Activated CD8-positive, alpha-beta T cell treated with anti-CD3 and anti-CD28 coated beads, Interleukin-2, amount 10 ng/mL, durations not matched to agents 7 days and 5 days (primary cell): ENCODE measurements at regions of chr10 and their contacts with region 1.

Region 1: GRCh38 chr10:61903221-61903927 is 1.9 kb downstream of the ARID5B start:
- DNase-seq: peak; percentile 79
- ATAC-seq: peak; percentile 67
- H3K4me3 Mint-ChIP-seq: peak overlapping the region; percentile 94
- H3K27ac Mint-ChIP-seq: peak overlapping the region; percentile 97
- H3K4me1 Mint-ChIP-seq: peaks cover 36% of the 10 kb centered on the region
- H3K27me3 Mint-ChIP-seq: no peaks in the 10 kb centered on the region

Region 2: GRCh38 chr10:61943674-61944410 is 40.5 kb after region 1 on chr10:
- CTCF ChIA-PET with region 1: interaction called, 29 read pairs
- POLR2A ChIA-PET with region 1: interaction called, 53 read pairs
- DNase-seq: no peak
- ATAC-seq: peak; percentile 29
- H3K4me3 Mint-ChIP-seq: peak overlapping the region; percentile 69
- H3K27ac Mint-ChIP-seq: peak overlapping the region; percentile 81
- H3K4me1 Mint-ChIP-seq: peaks cover 57% of the 10 kb centered on the region
- H3K27me3 Mint-ChIP-seq: no peaks in the 10 kb centered on the region

Region 3: GRCh38 chr10:61974601-61975390 is 71.4 kb after region 1 on chr10:
- CTCF ChIA-PET with region 1: no interaction called
- POLR2A ChIA-PET with region 1: no interaction called
- DNase-seq: no peak
- ATAC-seq: no peak
- H3K4me3 Mint-ChIP-seq: no peak overlapping the region
- H3K27ac Mint-ChIP-seq: no peak overlapping the region
- H3K4me1 Mint-ChIP-seq: peaks cover 17% of the 10 kb centered on the region
- H3K27me3 Mint-ChIP-seq: no peaks in the 10 kb centered on the region

Region 4: GRCh38 chr10:61987951-61988379 is 84.6 kb after region 1 on chr10:
- CTCF ChIA-PET with region 1: interaction called, 20 read pairs
- POLR2A ChIA-PET with region 1: interaction called, 58 read pairs
- DNase-seq: peak; percentile 42
- ATAC-seq: peak; percentile 91
- H3K4me3 Mint-ChIP-seq: peak overlapping the region; percentile 56
- H3K27ac Mint-ChIP-seq: peak overlapping the region; percentile 88
- H3K4me1 Mint-ChIP-seq: peaks cover 56% of the 10 kb centered on the region
- H3K27me3 Mint-ChIP-seq: no peaks in the 10 kb centered on the region

Region 5: GRCh38 chr10:62050893-62051433 is 147.6 kb after region 1 on chr10:
- CTCF ChIA-PET with region 1: interaction called, 13 read pairs
- POLR2A ChIA-PET with region 1: interaction called, 117 read pairs
- DNase-seq: peak; percentile 75
- ATAC-seq: peak; percentile 47
- H3K4me3 Mint-ChIP-seq: peak overlapping the region; percentile 77
- H3K27ac Mint-ChIP-seq: peak overlapping the region; percentile 95
- H3K4me1 Mint-ChIP-seq: peaks cover 99% of the 10 kb centered on the region
- H3K27me3 Mint-ChIP-seq: no peaks in the 10 kb centered on the region

Region 6: GRCh38 chr10:62183442-62183841 is 280.1 kb after region 1 on chr10:
- CTCF ChIA-PET with region 1: interaction called, 5 read pairs
- POLR2A ChIA-PET with region 1: interaction called, 30 read pairs
- DNase-seq: peak; percentile 71
- ATAC-seq: peak; percentile 83
- H3K4me3 Mint-ChIP-seq: peak overlapping the region; percentile 50
- H3K27ac Mint-ChIP-seq: peak overlapping the region; percentile 87
- H3K4me1 Mint-ChIP-seq: peaks cover 82% of the 10 kb centered on the region
- H3K27me3 Mint-ChIP-seq: no peaks in the 10 kb centered on the region